Ovary (tissue), 10 donors: ENCODE measurements at regions of chr16 and their contacts with region 1.

Region 1: DNA sequence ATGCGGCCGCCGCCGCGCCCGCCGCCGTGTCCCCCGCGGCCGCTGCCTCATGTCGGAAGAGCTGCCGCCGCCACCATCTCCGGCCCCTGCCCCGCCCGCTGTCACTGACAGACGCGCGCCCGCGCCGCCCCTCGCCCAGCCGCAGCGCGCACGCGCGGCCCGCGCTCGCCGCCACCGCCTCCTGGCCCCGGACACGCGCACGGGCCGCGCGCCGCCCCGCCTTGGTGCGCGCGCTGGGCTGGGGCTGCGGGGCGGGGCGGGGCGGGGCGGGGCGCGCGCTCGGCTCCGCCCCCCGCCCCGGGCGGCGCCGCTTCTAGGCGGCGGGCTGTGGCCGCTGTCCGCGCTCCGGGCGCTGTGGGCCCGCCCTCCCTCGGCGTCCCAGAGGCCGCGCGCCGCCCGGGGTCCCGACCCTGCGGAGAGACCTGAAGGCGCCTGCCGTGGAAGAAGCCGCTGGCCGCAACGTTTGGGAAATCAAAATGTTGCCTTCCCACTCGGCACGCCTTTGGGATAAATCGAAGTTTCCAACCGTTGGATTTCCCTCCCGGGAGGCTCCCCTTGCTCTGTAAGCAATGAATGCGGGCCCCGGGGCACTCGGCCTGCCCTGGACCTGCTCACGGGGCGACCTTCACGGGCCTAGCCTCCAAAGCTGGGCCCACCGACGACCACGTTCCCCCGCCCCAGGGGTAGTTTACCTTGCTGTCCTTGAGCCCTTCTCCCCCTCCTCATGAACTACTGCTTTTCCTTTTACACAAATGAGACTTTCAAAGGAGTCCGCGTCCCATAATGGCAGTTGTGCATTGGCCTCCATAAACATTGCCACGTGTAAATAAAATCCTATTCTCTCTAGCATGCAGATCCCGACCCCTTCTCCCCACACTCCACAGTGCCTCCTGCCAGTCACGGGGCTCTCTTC is at the start of gene ADCY9:
- DNase-seq: peak; percentile 73 to 85 (median 83)
- H3K4me3 ChIP-seq: peak within 1 kb of the TSS; percentile 82
- H3K27ac ChIP-seq: peak within 1 kb of the TSS; percentile 17 to 80
- H3K4me1 ChIP-seq: peaks cover 14% of the 10 kb centered on the region
- H3K27me3 ChIP-seq: no peaks in the 10 kb centered on the region
- CTCF ChIP-seq: no peak
- EP300 ChIP-seq: peak; percentile 15
- POLR2A ChIP-seq: peak; percentile 53
- total RNA-seq, gene ADCY9: 10.7 to 31.3 (median 25.8) TPM

Region 2: DNA sequence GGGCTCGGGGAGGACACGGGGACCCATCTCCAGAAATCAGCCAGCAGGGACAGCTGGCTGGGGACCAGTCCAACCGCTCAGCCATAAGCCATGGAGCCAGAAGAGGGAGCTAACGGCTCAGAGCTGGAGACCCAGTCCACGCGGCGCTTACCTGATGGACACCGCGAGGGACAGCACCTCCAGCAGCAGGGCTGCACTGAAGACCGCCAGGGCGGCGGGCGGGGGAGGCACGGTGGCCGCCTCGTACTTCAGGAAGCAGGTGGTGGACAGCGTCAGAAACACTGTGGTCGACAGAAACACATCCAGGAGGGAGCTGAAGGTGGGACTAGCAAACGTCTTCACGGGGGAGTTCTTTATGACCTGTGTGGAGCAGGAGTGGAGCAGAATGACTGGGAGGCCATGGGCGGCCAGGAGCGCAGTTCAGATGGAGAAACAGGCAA is 133.5 kb before region 1 on chr16:
- intact Hi-C with region 1: loop called in 2 of 4 experiments (anchors 10 kb)
- DNase-seq: peak; percentile 70 to 79 (median 77)
- H3K4me3 ChIP-seq: no peak overlapping the region
- H3K27ac ChIP-seq: no peak overlapping the region
- H3K4me1 ChIP-seq: peaks cover 3% of the 10 kb centered on the region
- H3K27me3 ChIP-seq: no peaks in the 10 kb centered on the region
- CTCF ChIP-seq: peak; percentile 58 to 68 (median 59)
- EP300 ChIP-seq: no peak
- POLR2A ChIP-seq: no peak

Region 3: DNA sequence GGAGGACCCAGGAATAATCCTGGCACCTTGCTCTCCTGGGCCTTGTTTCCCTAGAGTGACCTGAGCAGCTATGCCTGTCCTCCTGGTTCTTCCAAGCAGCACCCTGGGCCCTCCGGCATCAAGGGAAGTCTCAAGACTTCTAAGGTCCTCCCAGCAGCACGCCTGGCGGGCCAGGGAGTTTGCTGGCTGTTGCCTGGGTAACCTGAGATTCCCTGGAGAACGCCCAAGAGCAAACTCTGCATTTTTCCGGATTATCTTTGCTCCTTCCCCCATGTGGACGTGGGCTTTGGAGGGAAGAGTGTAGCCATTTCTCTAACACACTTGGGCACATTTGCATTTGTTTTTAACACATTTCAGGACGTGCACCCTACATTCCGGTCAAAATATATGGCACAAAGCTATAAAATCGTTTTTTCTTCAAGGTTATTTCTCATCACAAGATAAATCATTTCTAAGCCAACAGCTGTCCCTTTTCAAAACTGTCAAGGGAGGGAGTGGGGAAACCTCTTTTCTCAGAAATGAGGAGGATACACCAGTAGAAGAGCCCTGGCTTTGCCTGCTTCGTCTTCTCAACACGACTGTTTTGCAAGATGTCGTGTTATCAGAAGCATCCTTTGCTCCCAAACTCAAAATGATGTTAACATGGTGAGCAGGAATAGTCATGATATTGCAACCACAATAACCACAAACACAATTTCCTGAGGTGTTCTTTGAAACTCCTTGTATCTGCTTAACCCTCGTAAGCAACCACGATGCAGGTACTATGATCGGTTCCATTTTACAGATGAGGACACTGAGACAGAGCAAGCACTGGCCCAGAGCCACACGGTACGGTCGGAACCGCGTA is 116.9 kb before region 1 on chr16:
- intact Hi-C with region 1: loop called in 1 of 4 experiments (anchors 5 kb)
- DNase-seq: peak; percentile 83 to 89 (median 87)
- H3K4me3 ChIP-seq: peak overlapping the region; percentile 7
- H3K27ac ChIP-seq: peak overlapping the region; percentile 14 to 74
- H3K4me1 ChIP-seq: peaks cover 11% of the 10 kb centered on the region
- H3K27me3 ChIP-seq: no peaks in the 10 kb centered on the region
- CTCF ChIP-seq: no peak
- EP300 ChIP-seq: peak; percentile 86
- POLR2A ChIP-seq: peak; percentile 23

Region 4: DNA sequence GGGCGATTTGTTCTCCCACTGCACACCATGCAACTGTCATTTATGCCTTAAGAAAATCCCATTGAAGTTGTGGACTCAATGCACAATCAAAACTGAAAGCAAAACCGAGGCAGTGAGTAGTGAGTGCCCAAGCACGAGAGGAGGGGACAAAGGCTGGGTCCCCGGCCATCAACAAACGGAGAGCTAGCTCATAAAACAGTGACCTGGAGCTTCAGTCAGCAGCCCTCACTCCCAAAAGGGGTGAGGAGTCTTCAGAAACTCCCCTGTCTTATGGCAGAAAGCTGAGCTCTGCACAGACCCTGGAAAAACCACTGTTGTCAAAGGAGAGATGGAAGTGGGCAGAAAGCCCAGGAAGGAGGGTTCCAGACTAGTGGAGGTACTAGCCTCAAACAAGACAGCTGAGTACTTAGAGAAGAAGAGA is 97.2 kb before region 1 on chr16:
- intact Hi-C with region 1: loop called in 1 of 4 experiments (anchors 10 kb)
- DNase-seq: no peak
- H3K4me3 ChIP-seq: peak overlapping the region; percentile 17
- H3K27ac ChIP-seq: peak overlapping the region; percentile 47 to 69
- H3K4me1 ChIP-seq: peaks cover 8% of the 10 kb centered on the region
- H3K27me3 ChIP-seq: no peaks in the 10 kb centered on the region
- CTCF ChIP-seq: no peak
- EP300 ChIP-seq: no peak
- POLR2A ChIP-seq: no peak